Activated B cell treated with CpG ODN at 0.5 μM for 24 hours (primary cell): ENCODE measurements at regions of chr5 and their contacts with region 1.

Region 1: DNA sequence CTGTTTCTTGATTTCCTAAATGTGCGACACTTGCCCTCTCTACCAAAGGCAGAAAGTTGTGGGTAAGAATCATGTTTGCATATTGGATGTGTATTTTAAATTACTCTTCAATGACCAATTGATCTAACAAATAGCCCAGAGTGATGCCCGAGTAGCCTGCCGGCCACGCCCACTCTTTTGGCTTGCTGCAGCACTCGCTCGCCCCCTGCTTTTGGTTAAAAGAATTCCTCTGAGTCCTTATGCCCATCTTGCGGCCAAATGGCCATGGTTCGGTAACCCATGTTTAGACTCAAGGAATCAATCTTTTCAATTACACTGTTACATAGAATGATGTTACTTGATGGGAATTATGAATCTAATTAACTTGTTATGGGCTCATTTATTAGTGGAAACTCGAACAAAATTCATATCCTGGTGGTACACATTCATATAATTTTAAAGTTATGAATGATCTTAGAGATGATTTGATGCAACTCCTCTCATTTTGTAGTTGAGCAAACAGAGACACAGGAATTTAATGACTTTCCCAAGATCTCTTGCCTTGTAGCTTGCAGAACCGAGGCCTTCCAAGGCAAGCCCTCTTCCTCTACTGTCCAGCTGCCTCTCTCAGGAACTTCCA is 36.5 kb downstream of the PPIC start:
- DNase-seq: peak; percentile 37
- ATAC-seq: peak; percentile 70
- H3K4me3 Mint-ChIP-seq: no peak overlapping the region
- H3K27ac Mint-ChIP-seq: no peak overlapping the region
- H3K4me1 Mint-ChIP-seq: no peaks in the 10 kb centered on the region
- H3K27me3 Mint-ChIP-seq: no peaks in the 10 kb centered on the region
- CTCF ChIP-seq: peak; percentile 47

Region 2: DNA sequence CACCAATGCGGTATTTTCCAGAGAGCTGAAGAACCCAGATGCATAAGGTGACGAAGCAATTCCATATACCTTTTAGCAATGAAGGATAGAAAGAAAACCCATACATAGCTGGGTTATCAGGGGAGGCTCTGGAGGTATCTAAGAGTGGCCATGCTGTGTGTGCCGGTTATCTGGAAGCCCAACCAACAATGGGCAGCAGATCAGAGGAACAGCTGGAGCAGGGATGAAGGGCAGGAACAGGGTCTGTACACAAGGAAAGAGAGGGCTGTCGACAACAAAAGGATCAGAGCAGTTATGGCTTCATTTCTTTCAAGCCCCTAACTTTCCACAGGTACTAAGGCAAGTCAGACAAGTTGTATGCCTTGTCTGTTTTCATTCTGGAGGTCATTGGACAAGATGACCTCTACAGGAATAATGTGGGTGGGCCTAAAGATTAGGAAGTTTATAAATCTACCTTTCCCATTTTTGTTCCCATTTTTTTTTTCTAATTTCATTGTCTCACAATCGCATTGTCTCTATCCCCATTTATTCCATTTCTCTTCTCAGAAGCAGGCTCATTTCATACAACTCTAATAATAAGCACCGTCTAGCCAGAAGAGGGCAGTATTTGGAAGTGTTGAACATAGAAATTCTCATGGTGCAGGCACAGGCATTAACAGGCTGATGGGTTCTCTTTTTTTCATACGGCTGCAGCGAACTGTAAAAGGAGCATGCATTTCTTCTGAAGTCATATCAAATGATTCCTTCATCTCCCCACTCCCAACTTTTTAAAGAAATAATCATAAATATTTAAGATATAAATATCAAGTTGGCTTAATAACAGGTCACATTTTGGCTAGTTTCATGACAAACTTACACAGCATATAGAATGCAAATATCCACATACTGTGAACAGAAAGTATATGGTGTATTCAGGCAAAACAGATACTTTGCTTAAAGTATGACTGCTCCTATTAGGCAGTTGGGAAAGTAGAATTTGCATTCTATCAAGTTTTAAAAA is 807.3 kb before region 1 on chr5:
- CTCF ChIA-PET with region 1: no interaction called
- POLR2A ChIA-PET with region 1: no interaction called
- intact Hi-C with region 1: loop called (anchors 5 kb)
- DNase-seq: no peak
- ATAC-seq: peak; percentile 42
- H3K4me3 Mint-ChIP-seq: no peak overlapping the region
- H3K27ac Mint-ChIP-seq: no peak overlapping the region
- H3K4me1 Mint-ChIP-seq: no peaks in the 10 kb centered on the region
- H3K27me3 Mint-ChIP-seq: peaks cover 17% of the 10 kb centered on the region
- CTCF ChIP-seq: no peak

Region 3: GRCh38 chr5:122500245-122501075 is 499.6 kb before region 1 on chr5:
- CTCF ChIA-PET with region 1: no interaction called
- POLR2A ChIA-PET with region 1: no interaction called
- intact Hi-C with region 1: loop called (anchors 1 kb)
- DNase-seq: no peak
- ATAC-seq: no peak
- H3K4me3 Mint-ChIP-seq: no peak overlapping the region
- H3K27ac Mint-ChIP-seq: no peak overlapping the region
- H3K4me1 Mint-ChIP-seq: no peaks in the 10 kb centered on the region
- H3K27me3 Mint-ChIP-seq: peaks cover 7% of the 10 kb centered on the region
- CTCF ChIP-seq: no peak

Region 4: GRCh38 chr5:122790354-122791103 is 209.5 kb before region 1 on chr5:
- CTCF ChIA-PET with region 1: no interaction called
- POLR2A ChIA-PET with region 1: no interaction called
- intact Hi-C with region 1: no loop called
- DNase-seq: no peak
- ATAC-seq: no peak
- H3K4me3 Mint-ChIP-seq: peak overlapping the region; percentile 12
- H3K27ac Mint-ChIP-seq: peak overlapping the region; percentile 68
- H3K4me1 Mint-ChIP-seq: peaks cover 72% of the 10 kb centered on the region
- H3K27me3 Mint-ChIP-seq: no peaks in the 10 kb centered on the region
- CTCF ChIP-seq: no peak

Region 5: DNA sequence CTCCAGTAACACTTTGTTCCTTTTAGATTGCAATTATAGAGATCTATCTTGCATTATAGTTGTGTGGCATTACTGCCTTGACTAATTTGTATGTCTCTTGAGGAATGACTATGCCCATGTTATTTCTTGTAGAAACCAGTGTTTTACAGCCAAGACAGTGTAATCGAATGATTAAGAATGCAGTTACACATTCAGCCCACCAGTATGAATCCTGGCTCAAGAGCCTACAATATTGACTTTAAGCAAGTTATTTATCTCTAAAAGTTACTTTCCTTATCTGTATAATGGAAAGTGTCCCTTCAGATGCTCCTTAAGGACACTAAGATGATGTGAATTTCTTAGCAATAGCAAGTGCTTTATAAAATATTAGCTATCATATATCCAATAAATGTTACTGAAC is 164.4 kb before region 1 on chr5:
- CTCF ChIA-PET with region 1: no interaction called
- POLR2A ChIA-PET with region 1: no interaction called
- intact Hi-C with region 1: loop called (anchors 10 kb)
- DNase-seq: no peak
- ATAC-seq: no peak
- H3K4me3 Mint-ChIP-seq: no peak overlapping the region
- H3K27ac Mint-ChIP-seq: no peak overlapping the region
- H3K4me1 Mint-ChIP-seq: peaks cover 9% of the 10 kb centered on the region
- H3K27me3 Mint-ChIP-seq: no peaks in the 10 kb centered on the region
- CTCF ChIP-seq: no peak

Region 6: GRCh38 chr5:122896598-122897282 is 103.3 kb before region 1 on chr5:
- CTCF ChIA-PET with region 1: interaction called, 3 read pairs
- POLR2A ChIA-PET with region 1: no interaction called
- intact Hi-C with region 1: loop called (anchors 1 kb)
- DNase-seq: no peak
- ATAC-seq: no peak
- H3K4me3 Mint-ChIP-seq: no peak overlapping the region
- H3K27ac Mint-ChIP-seq: no peak overlapping the region
- H3K4me1 Mint-ChIP-seq: no peaks in the 10 kb centered on the region
- H3K27me3 Mint-ChIP-seq: no peaks in the 10 kb centered on the region
- CTCF ChIP-seq: no peak

Region 7: GRCh38 chr5:123014689-123015088 is 14.6 kb after region 1 on chr5:
- CTCF ChIA-PET with region 1: no interaction called
- POLR2A ChIA-PET with region 1: no interaction called
- intact Hi-C with region 1: no loop called
- DNase-seq: no peak
- ATAC-seq: no peak
- H3K4me3 Mint-ChIP-seq: no peak overlapping the region
- H3K27ac Mint-ChIP-seq: no peak overlapping the region
- H3K4me1 Mint-ChIP-seq: peaks cover 7% of the 10 kb centered on the region
- H3K27me3 Mint-ChIP-seq: peaks cover 3% of the 10 kb centered on the region
- CTCF ChIP-seq: no peak